Caco-2 (cell line): ENCODE measurements at regions of chr3 and their contacts with region 1.

Region 1: GRCh38 chr3:28916713-28917499 is 364.0 kb upstream of the RBMS3 start:
- DNase-seq: peak in 1 of 2 experiments; percentile 9
- H3K4me3 ChIP-seq: no peak overlapping the region
- H3K4me3 Mint-ChIP-seq: no peak overlapping the region
- H3K27ac Mint-ChIP-seq: no peak overlapping the region
- H3K4me1 ChIP-seq: 0 out of 2 replicates have a peak, but pooled peaks cover 4% of the 10 kb centered on the region
- H3K4me1 Mint-ChIP-seq: peaks cover 4% of the 10 kb centered on the region
- H3K27me3 ChIP-seq: no peaks in the 10 kb centered on the region
- H3K27me3 Mint-ChIP-seq: no peaks in the 10 kb centered on the region
- CTCF ChIP-seq: peak in 1 of 2 experiments; percentile 22

Region 2: GRCh38 chr3:28856796-28857195 is 60.1 kb before region 1 on chr3:
- CTCF ChIA-PET with region 1: no interaction called
- POLR2A ChIA-PET with region 1: no interaction called
- intact Hi-C with region 1: loop called (anchors 5 kb)
- DNase-seq: no peak
- H3K4me3 ChIP-seq: no peak overlapping the region
- H3K4me3 Mint-ChIP-seq: no peak overlapping the region
- H3K27ac Mint-ChIP-seq: no peak overlapping the region
- H3K4me1 ChIP-seq: no peaks in the 10 kb centered on the region
- H3K4me1 Mint-ChIP-seq: peaks cover 8% of the 10 kb centered on the region
- H3K27me3 ChIP-seq: no peaks in the 10 kb centered on the region
- H3K27me3 Mint-ChIP-seq: peaks cover 4% of the 10 kb centered on the region
- CTCF ChIP-seq: no peak